ENCODE measurements at regions of chr6 and their contacts with region 1.

Region 1: GRCh38 chr6:118467181-118467580 is 80.9 kb upstream of the PLN start:
- DNase-seq: no peak
- H3K4me3 Mint-ChIP-seq: no peak overlapping the region
- H3K27ac Mint-ChIP-seq: no peak overlapping the region
- H3K4me1 Mint-ChIP-seq: peaks cover 17% of the 10 kb centered on the region
- H3K27me3 Mint-ChIP-seq: no peaks in the 10 kb centered on the region

Region 2: DNA sequence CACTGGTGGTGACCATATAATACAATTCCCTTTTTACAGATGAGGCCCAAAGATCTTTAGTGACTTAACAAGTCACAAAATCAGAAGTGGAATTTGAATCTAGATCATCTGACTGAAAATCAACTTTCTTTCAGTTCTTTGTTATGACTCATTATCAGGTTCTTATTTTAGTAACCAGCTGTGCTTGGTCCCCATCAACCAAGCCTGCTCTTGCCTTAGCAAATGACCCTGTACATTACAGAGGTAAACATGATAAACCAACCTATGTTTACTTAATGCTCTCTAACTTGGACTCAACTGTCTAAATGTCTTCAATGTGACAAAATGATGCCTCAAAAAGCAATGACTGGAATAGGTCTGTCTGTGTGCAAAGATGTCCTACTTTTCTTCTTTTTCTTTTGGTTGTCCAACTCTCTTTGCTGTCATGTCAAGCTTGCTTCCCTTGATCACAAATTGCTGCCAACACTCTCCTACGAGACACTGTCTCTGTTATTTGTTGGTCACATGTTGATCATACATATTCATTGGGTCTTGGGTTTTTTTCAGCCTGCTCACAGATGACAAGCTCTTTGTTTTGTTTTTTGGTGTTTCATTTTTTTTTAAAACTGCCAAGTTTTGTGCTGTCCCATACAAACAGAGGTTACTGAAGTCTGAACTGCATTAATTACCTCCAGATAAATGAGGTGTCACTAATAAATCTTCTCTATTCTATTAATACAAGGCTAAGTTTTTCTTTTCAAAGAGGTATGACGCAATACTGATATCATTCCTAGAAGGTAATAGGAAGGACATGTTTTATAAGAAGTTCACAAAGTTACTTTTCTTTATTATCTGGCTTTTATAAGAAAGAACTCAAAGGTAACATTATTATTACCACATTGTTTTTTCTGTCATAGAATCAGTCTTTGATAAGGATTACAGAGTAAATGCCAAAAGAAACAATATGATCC is 18.7 kb after region 1 on chr6:
- intact Hi-C with region 1: loop called (anchors 2 kb)
- DNase-seq: no peak
- H3K4me3 Mint-ChIP-seq: no peak overlapping the region
- H3K27ac Mint-ChIP-seq: no peak overlapping the region
- H3K4me1 Mint-ChIP-seq: peaks cover 17% of the 10 kb centered on the region
- H3K27me3 Mint-ChIP-seq: no peaks in the 10 kb centered on the region

Region 3: DNA sequence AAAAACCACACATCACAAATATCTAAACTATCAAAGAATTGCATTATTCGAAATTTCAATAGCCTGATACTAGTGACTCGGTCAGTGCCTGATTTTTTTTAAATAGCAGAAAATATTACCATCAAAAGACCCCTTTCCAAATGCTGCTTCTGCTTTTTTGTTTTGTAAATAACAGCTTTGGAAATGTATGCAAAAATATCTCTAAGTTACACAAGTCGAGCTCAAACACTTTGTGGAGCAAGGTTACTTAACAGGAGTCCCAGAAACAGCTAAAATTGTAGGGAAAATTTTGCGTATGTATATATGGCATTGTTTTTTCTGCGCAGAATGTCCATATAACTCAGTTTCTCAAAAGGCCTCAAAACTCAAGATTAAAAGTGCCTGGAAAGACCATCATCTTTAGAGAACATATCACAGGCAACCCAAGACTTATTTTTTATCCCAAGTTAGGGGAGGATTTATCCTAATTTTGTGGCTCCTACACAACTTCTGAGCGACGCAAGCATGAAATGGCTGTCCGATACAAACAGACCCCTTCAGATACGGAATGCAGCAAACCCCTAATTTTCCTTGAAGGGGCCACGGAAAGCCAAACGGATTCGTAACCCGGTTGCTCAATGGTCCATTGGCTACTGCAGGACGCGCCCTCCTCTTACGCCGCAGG is 182.9 kb after region 1 on chr6:
- intact Hi-C with region 1: no loop called
- DNase-seq: no peak
- H3K4me3 Mint-ChIP-seq: peak overlapping the region; percentile 85
- H3K27ac Mint-ChIP-seq: peak overlapping the region; percentile 70
- H3K4me1 Mint-ChIP-seq: peaks cover 42% of the 10 kb centered on the region
- H3K27me3 Mint-ChIP-seq: no peaks in the 10 kb centered on the region